Spleen (tissue), 13 donors: ENCODE measurements at regions of chr10 and their contacts with region 1.

Region 1: GRCh38 chr10:43671656-43672531 is 23.2 kb upstream of the ZNF32 start:
- DNase-seq: no peak
- H3K4me3 ChIP-seq: no peak overlapping the region
- H3K27ac ChIP-seq: no peak overlapping the region
- H3K4me1 ChIP-seq: peaks cover 0 to 18% (median 8%) of the 10 kb centered on the region in 6 donors
- H3K27me3 ChIP-seq: peaks cover 0 to 55% (median 12%) of the 10 kb centered on the region in 7 donors
- CTCF ChIP-seq: peak; percentile 73 to 90 (median 83)
- POLR2A ChIP-seq: no peak

Region 2: GRCh38 chr10:43739161-43739560 is 67.3 kb after region 1 on chr10:
- intact Hi-C with region 1: no loop called
- DNase-seq: no peak
- H3K4me3 ChIP-seq: no peak overlapping the region
- H3K27ac ChIP-seq: no peak overlapping the region
- H3K4me1 ChIP-seq: no peaks in the 10 kb centered on the region
- H3K27me3 ChIP-seq: no peaks in the 10 kb centered on the region
- CTCF ChIP-seq: no peak
- POLR2A ChIP-seq: no peak

Region 3: GRCh38 chr10:44386546-44387052 is 714.7 kb after region 1 on chr10:
- intact Hi-C with region 1: loop called (anchors 5 kb)
- DNase-seq: peak; percentile 84
- H3K4me3 ChIP-seq: peak overlapping the region in 3 of 8 donors; percentile 50 to 70 (median 68)
- H3K27ac ChIP-seq: peak overlapping the region in 5 of 8 donors; percentile 73 to 81 (median 76)
- H3K4me1 ChIP-seq: peaks cover 0 to 42% (median 24%) of the 10 kb centered on the region in 6 donors
- H3K27me3 ChIP-seq: peaks cover 0 to 80% (median 36%) of the 10 kb centered on the region in 7 donors
- CTCF ChIP-seq: peak; percentile 24 to 85 (median 75)
- POLR2A ChIP-seq: no peak

Region 4: GRCh38 chr10:44864637-44865288 is 1192.9 kb after region 1 on chr10:
- intact Hi-C with region 1: loop called (anchors 5 kb)
- DNase-seq: peak; percentile 96
- H3K4me3 ChIP-seq: peak overlapping the region; percentile 29 to 74 (median 44)
- H3K27ac ChIP-seq: peak overlapping the region in 1 of 8 donors; percentile 18
- H3K4me1 ChIP-seq: peaks cover 4 to 41% (median 26%) of the 10 kb centered on the region in 6 donors
- H3K27me3 ChIP-seq: peaks cover 0 to 57% (median 20%) of the 10 kb centered on the region in 7 donors
- CTCF ChIP-seq: peak; percentile 56 to 99 (median 96)
- POLR2A ChIP-seq: no peak